Dorsolateral prefrontal cortex (tissue), 120 donors: ENCODE measurements at regions of chr11 and their contacts with region 1.

Region 1: GRCh38 chr11:535519-536454 is at the start of gene HRAS:
- DNase-seq: peak; percentile 88 to 98 (median 94)
- H3K4me3 ChIP-seq: peak within 1 kb of the TSS; percentile 68 to 92 (median 86)
- H3K27ac ChIP-seq: peak within 1 kb of the TSS in 57 of 59 donors; percentile 35 to 93 (median 80)
- H3K27me3 ChIP-seq: peaks cover 0 to 10% (median 0%) of the 10 kb centered on the region in 45 donors
- CTCF ChIP-seq: peak in 10 of 56 donors; percentile 9 to 41 (median 20)
- total RNA-seq, gene HRAS: 50.7 to 122 (median 86.8) TPM

Region 2: GRCh38 chr11:518463-519250 is 17.1 kb before region 1 on chr11:
- intact Hi-C with region 1: loop called in 1 of 2 experiments (anchors 2 kb)
- DNase-seq: peak; percentile 62 to 85 (median 71)
- H3K4me3 ChIP-seq: peak overlapping the region in 54 of 59 donors; percentile 16 to 63 (median 42)
- H3K27ac ChIP-seq: peak overlapping the region in 46 of 59 donors; percentile 3 to 80 (median 59)
- H3K27me3 ChIP-seq: no peaks in the 10 kb centered on the region
- CTCF ChIP-seq: peak; percentile 74 to 100 (median 98)